Left ventricle myocardium inferior (tissue), 1 donor: ENCODE measurements at regions of chr17 and their contacts with region 1.

Region 1: GRCh38 chr17:4004517-4005295 is 40.5 kb upstream of the ATP2A3 start:
- DNase-seq: peak; percentile 46
- H3K4me3 ChIP-seq: no peak overlapping the region
- H3K27ac ChIP-seq: no peak overlapping the region
- H3K4me1 ChIP-seq: peaks cover 23% of the 10 kb centered on the region
- H3K27me3 ChIP-seq: no peaks in the 10 kb centered on the region
- CTCF ChIP-seq: peak; percentile 95

Region 2: DNA sequence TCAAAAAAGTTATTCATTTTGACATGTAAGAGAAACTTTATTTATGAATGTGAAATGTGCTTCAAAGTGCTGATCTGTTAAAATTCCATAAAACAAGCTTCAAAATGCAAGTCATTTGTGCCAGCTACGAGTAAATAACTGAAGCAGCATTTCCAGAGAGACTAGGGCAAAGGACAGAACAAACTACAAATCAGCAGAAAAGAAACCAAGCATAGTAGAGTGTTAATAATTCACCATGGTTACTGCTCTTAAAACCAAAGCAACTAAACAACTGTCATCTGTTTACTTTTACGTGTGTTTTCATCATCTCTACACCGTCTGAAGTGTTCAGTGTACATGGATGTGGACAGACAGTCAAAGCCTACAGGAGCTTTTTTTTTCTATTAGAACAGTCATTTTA is 530.5 kb before region 1 on chr17:
- intact Hi-C with region 1: no loop called
- DNase-seq: no peak
- H3K4me3 ChIP-seq: no peak overlapping the region
- H3K27ac ChIP-seq: peak overlapping the region; percentile 1
- H3K4me1 ChIP-seq: peaks cover 21% of the 10 kb centered on the region
- H3K27me3 ChIP-seq: no peaks in the 10 kb centered on the region
- CTCF ChIP-seq: no peak

Region 3: GRCh38 chr17:3865176-3865575 is 139.5 kb before region 1 on chr17:
- intact Hi-C with region 1: loop called (anchors 10 kb)
- DNase-seq: no peak
- H3K4me3 ChIP-seq: no peak overlapping the region
- H3K27ac ChIP-seq: no peak overlapping the region
- H3K4me1 ChIP-seq: peaks cover 12% of the 10 kb centered on the region
- H3K27me3 ChIP-seq: no peaks in the 10 kb centered on the region
- CTCF ChIP-seq: no peak

Region 4: DNA sequence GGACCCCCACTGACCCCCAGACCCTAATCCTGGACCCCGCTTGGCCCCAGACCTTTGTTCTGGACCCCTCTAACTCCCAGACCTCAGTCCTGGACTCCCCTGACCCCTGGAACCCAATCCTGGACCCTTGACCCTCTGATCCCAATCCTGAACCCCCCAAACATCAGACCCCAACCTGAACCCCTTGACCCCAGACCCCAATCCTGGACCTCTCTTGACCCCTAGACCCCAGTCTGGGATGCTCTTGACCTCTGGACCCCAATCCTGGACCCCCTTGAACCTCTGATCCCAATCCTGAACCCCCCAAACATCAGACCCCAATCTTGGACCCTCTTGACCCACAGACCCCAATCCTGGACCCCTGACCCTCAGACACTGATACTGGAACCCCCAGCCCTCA is 74.9 kb before region 1 on chr17:
- intact Hi-C with region 1: loop called (anchors 5 kb)
- DNase-seq: no peak
- H3K4me3 ChIP-seq: no peak overlapping the region
- H3K27ac ChIP-seq: no peak overlapping the region
- H3K4me1 ChIP-seq: peaks cover 14% of the 10 kb centered on the region
- H3K27me3 ChIP-seq: no peaks in the 10 kb centered on the region
- CTCF ChIP-seq: no peak